SK-N-SH (cell line): ENCODE measurements at regions of chr11 and their contacts with region 1.

Region 1: GRCh38 chr11:15720460-15720859 is 605.7 kb downstream of the INSC start:
- DNase-seq: no peak
- H3K4me3 ChIP-seq: no peak overlapping the region
- H3K27ac ChIP-seq: no peak overlapping the region
- H3K4me1 ChIP-seq: no peaks in the 10 kb centered on the region; a peak in 1 of 4 replicates
- H3K27me3 ChIP-seq: no peaks in the 10 kb centered on the region
- CTCF ChIP-seq: no peak
- EP300 ChIP-seq: no peak
- RAD21 ChIP-seq: no peak

Region 2: GRCh38 chr11:15730617-15731385 is 10.3 kb after region 1 on chr11:
- CTCF ChIA-PET with region 1: interaction called, 14 read pairs
- POLR2A ChIA-PET with region 1: no interaction called
- DNase-seq: no peak
- H3K4me3 ChIP-seq: no peak overlapping the region
- H3K27ac ChIP-seq: no peak overlapping the region
- H3K4me1 ChIP-seq: no peaks in the 10 kb centered on the region
- H3K27me3 ChIP-seq: no peaks in the 10 kb centered on the region
- CTCF ChIP-seq: no peak
- EP300 ChIP-seq: no peak
- RAD21 ChIP-seq: no peak

Region 3: GRCh38 chr11:15852179-15852578 is 131.7 kb after region 1 on chr11:
- CTCF ChIA-PET with region 1: no interaction called
- POLR2A ChIA-PET with region 1: no interaction called
- DNase-seq: no peak
- H3K4me3 ChIP-seq: no peak overlapping the region
- H3K27ac ChIP-seq: no peak overlapping the region
- H3K4me1 ChIP-seq: peaks cover 0 to 3% of the 10 kb centered on the region in 2 experiments; a peak in 2 of 4 replicates
- H3K27me3 ChIP-seq: no peaks in the 10 kb centered on the region
- CTCF ChIP-seq: peak; percentile 41
- EP300 ChIP-seq: no peak
- RAD21 ChIP-seq: peak; percentile 57